K562 (cell line): ENCODE measurements at regions of chr1 and their contacts with region 1.

Region 1: DNA sequence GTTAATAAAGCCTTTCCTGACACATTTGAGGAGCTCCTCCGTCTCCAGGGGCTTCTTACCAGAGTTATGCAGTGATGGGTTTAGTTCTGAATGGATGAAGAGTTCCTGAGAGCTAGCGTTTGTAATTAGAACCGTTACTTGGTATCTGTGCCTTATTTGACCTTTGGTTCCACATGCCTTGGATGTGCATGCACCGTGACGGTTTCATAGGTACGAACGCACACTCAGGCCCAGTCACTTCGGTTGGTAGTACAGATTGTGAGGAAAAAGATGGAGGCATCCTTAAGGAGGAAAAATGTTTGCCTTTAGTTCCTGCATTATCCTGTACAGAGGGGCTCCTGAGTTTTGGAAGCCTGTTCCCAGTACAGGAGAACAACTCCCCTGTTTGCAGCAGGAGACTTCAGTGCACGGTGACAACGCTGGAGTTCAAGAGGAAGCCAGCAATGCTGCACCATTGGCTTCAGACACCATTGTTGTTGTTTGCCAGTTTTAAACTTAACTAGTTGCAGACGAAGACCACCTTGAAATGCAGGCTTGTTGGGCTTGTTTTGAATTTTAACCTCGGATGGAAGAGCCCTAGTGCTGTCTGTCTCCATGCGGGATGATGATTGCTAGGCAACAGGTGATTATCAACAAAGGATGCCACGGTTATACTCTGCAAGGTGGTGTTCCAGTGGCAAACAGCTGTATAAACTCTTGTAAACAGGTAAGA is 8.2 kb downstream of the RBM15 start:
- DNase-seq: peak in 1 of 4 experiments; percentile 13
- ATAC-seq: peak; percentile 45
- H3K4me3 ChIP-seq: no peak overlapping the region
- H3K27ac ChIP-seq: peak overlapping the region; percentile 1; the same call in 1 of the 3 replicates
- H3K4me1 ChIP-seq: peaks cover 0 to 55% of the 10 kb centered on the region in 2 experiments; a peak in 4 of 5 replicates
- H3K27me3 ChIP-seq: no peaks in the 10 kb centered on the region
- CTCF ChIP-seq: no peak
- EP300 ChIP-seq: no peak
- POLR2A ChIP-seq: peak; percentile 55; the same call in 1 of the 2 replicates
- RAD21 ChIP-seq: no peak

Region 2: DNA sequence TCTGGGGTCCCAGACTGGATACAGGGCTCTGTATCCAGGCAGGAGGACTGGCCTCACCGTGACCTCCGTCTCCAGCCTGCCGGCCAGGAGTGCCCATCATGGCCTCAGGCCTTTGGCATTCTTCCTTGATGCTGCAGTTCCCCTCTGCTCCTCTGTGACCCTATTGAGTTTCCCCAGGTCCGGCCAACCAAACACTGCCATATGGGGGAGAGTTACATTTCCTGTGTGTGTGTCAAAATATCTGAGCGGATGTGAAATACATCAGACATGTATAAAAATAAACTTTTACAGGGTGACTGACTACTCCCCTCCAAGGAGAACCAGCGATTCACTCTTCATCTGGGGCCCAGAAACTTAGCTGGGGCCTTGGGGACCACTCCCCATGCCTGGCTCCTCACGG is 245.3 kb before region 1 on chr1:
- CTCF ChIA-PET with region 1: no interaction called
- POLR2A ChIA-PET with region 1: no interaction called
- in situ Hi-C with region 1: no loop called
- intact Hi-C with region 1: no loop called
- DNase-seq: no peak
- ATAC-seq: no peak
- H3K4me3 ChIP-seq: no peak overlapping the region
- H3K27ac ChIP-seq: no peak overlapping the region
- H3K4me1 ChIP-seq: peaks cover 7 to 8% of the 10 kb centered on the region in 2 experiments; a peak in 3 of 5 replicates
- H3K27me3 ChIP-seq: peaks cover 9 to 48% of the 10 kb centered on the region in 2 experiments
- CTCF ChIP-seq: no peak
- EP300 ChIP-seq: no peak
- POLR2A ChIP-seq: no peak
- RAD21 ChIP-seq: no peak

Region 3: GRCh38 chr1:110360431-110360830 is 13.1 kb after region 1 on chr1:
- CTCF ChIA-PET with region 1: no interaction called
- POLR2A ChIA-PET with region 1: interaction called, 16 read pairs
- in situ Hi-C with region 1: no loop called
- intact Hi-C with region 1: no loop called
- DNase-seq: no peak
- ATAC-seq: no peak
- H3K4me3 ChIP-seq: no peak overlapping the region
- H3K27ac ChIP-seq: no peak overlapping the region
- H3K4me1 ChIP-seq: no peaks in the 10 kb centered on the region
- H3K27me3 ChIP-seq: no peaks in the 10 kb centered on the region
- CTCF ChIP-seq: no peak
- EP300 ChIP-seq: no peak
- POLR2A ChIP-seq: no peak
- RAD21 ChIP-seq: no peak